ENCODE measurements at regions of chr6 and their contacts with region 1.

Region 1: GRCh38 chr6:17803409-17803808 is 96.7 kb upstream of the NUP153 start:
- DNase-seq: no peak
- H3K4me3 ChIP-seq: no peak overlapping the region
- H3K27ac ChIP-seq: no peak overlapping the region
- H3K4me1 ChIP-seq: no peaks in the 10 kb centered on the region
- H3K27me3 ChIP-seq: no peaks in the 10 kb centered on the region
- CTCF ChIP-seq: no peak
- POLR2A ChIP-seq: no peak

Region 2: DNA sequence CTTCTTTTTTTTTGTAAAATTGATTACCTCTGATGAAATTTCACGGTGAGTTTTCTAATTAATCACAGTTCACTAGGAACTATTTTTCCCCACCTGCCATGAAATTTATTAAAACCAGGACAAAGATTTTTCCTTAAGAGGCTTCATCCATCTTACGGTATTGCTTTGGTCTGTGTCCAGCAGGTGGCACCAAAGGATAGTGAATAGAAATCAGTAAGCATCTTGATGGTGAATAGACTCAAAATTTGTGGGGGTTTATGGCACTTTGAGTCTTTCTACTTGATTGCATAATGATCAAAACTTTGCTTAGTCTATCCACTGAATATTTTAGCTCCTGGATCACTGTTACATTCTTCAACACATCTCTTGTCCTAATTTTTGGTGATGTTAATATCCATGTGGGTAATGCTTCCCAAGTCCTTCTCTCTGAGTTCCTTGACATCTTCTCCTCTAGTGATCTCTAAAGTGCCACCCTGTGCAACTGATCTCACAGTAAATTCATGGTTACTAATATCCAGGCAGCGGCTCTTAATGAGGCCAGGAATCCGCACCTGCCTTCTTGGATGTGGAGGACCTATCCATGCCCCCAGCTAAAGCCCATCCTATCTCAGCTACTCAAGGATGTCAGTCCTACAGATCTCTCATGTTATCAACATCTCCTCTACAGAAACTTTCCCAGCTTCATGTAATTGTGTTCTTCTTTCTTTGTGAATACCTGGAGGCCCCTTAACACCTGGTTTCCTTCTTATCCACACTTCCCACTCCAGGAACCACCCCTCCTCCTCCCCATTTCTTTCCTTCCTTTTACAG is 647.1 kb before region 1 on chr6:
- intact Hi-C with region 1: loop called in 1 of 2 experiments (anchors 5 kb)
- DNase-seq: peak; percentile 47 to 89 (median 72)
- H3K4me3 ChIP-seq: no peak overlapping the region
- H3K27ac ChIP-seq: no peak overlapping the region
- H3K4me1 ChIP-seq: no peaks in the 10 kb centered on the region
- H3K27me3 ChIP-seq: no peaks in the 10 kb centered on the region
- CTCF ChIP-seq: peak; percentile 55 to 88 (median 82)
- POLR2A ChIP-seq: no peak

Region 3: GRCh38 chr6:17971128-17972073 is 168.0 kb after region 1 on chr6:
- intact Hi-C with region 1: no loop called
- DNase-seq: peak in 4 of 7 donors; percentile 26 to 38 (median 31)
- H3K4me3 ChIP-seq: no peak overlapping the region
- H3K27ac ChIP-seq: no peak overlapping the region
- H3K4me1 ChIP-seq: peaks cover 12 to 16% of the 10 kb centered on the region in 2 donors
- H3K27me3 ChIP-seq: no peaks in the 10 kb centered on the region
- CTCF ChIP-seq: no peak
- POLR2A ChIP-seq: no peak

Measured in adrenal gland (tissue), 19 donors.